WTC11 (cell line): ENCODE measurements at regions of chr7 and their contacts with region 1.

Region 1: GRCh38 chr7:2608921-2609411 is 22.8 kb upstream of the TTYH3 start:
- DNase-seq: peak; percentile 73
- ATAC-seq: peak; percentile 63
- H3K4me3 Mint-ChIP-seq: no peak overlapping the region
- H3K27ac Mint-ChIP-seq: peak overlapping the region; percentile 22; the same call in 1 of the 2 replicates
- H3K4me1 Mint-ChIP-seq: peaks cover 20% of the 10 kb centered on the region
- H3K27me3 Mint-ChIP-seq: no peaks in the 10 kb centered on the region
- CTCF ChIP-seq: no peak

Region 2: GRCh38 chr7:2597273-2597640 is 11.7 kb before region 1 on chr7:
- CTCF ChIA-PET with region 1: interaction called, 14 read pairs
- POLR2A ChIA-PET with region 1: no interaction called
- DNase-seq: no peak
- ATAC-seq: no peak
- H3K4me3 Mint-ChIP-seq: no peak overlapping the region
- H3K27ac Mint-ChIP-seq: no peak overlapping the region
- H3K4me1 Mint-ChIP-seq: no peaks in the 10 kb centered on the region; the same call in 1 of the 2 replicates
- H3K27me3 Mint-ChIP-seq: no peaks in the 10 kb centered on the region
- CTCF ChIP-seq: no peak

Region 3: GRCh38 chr7:2632733-2633537 is 24.0 kb after region 1 on chr7:
- CTCF ChIA-PET with region 1: interaction called, 37 read pairs
- POLR2A ChIA-PET with region 1: interaction called, 6 read pairs
- DNase-seq: no peak
- ATAC-seq: no peak
- H3K4me3 Mint-ChIP-seq: peak overlapping the region; percentile 86
- H3K27ac Mint-ChIP-seq: peak overlapping the region; percentile 76
- H3K4me1 Mint-ChIP-seq: peaks cover 23% of the 10 kb centered on the region
- H3K27me3 Mint-ChIP-seq: peaks cover 2% of the 10 kb centered on the region; the same call in 1 of the 2 replicates
- CTCF ChIP-seq: no peak

Region 4: DNA sequence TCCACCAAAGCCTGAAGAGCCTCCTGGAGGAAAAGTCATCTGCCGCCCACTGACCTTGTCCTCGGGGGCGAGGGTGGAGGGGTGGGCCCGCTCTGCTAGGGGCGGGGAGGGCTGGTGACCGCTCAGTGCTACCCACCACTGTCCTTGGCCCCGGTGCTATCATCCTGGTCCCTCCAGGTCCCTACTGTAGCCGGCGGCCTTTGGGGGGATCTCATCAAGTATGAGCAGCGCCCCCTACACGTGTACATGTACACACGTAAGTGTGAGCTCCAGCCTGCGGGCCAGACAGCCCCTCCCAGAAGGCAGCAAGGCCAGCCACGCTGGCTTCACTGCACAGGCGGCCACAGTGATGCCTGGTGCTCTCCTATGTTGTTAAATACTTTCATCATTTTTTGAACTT is 42.4 kb after region 1 on chr7:
- CTCF ChIA-PET with region 1: interaction called, 16 read pairs
- POLR2A ChIA-PET with region 1: no interaction called
- DNase-seq: no peak
- ATAC-seq: no peak; the same call in 1 of the 2 replicates
- H3K4me3 Mint-ChIP-seq: no peak overlapping the region
- H3K27ac Mint-ChIP-seq: no peak overlapping the region
- H3K4me1 Mint-ChIP-seq: peaks cover 2% of the 10 kb centered on the region; the same call in 1 of the 2 replicates
- H3K27me3 Mint-ChIP-seq: no peaks in the 10 kb centered on the region
- CTCF ChIP-seq: no peak

Region 5: DNA sequence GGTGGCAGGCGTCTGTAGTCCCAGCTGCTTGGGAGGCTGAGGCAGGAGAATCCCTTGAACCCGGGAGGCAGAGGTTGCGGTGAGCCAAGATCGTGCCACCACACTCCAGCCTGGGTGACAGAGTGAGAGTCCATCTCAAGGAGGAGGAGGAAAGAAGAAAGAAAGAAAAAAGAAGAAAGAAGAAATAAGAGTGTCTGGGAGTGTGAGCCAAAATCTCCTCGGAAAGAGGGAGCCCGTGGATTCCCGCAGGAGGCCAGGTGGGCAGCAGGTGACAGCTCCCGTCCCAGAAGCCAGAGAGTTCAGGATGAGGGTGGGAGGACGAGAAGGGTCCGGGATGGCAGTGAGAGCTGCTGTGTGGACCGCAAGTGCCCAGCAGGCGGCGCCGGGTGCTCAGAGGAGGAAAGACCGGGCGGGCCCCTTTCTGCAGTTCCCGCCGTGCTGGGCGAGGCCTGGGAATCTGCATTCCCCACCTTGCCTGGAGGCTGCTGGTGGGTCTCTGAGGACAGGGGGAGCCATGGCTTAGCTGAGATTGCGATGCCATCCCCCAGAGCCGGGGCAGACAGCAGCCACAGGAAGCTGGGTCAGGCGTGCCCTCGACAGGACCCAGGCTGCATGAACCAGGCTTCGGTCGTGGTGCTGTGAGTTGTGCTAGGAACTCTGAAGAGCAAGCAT is 61.9 kb after region 1 on chr7:
- CTCF ChIA-PET with region 1: interaction called, 10 read pairs
- POLR2A ChIA-PET with region 1: no interaction called
- DNase-seq: peak; percentile 85
- ATAC-seq: peak; percentile 94
- H3K4me3 Mint-ChIP-seq: no peak overlapping the region
- H3K27ac Mint-ChIP-seq: no peak overlapping the region
- H3K4me1 Mint-ChIP-seq: no peaks in the 10 kb centered on the region
- H3K27me3 Mint-ChIP-seq: peaks cover 11% of the 10 kb centered on the region
- CTCF ChIP-seq: peak; percentile 77